ENCODE measurements at regions of chr17 and their contacts with region 1.

Region 1: GRCh38 chr17:7745748-7746470 is 28.4 kb downstream of the DNAH2 start:
- DNase-seq: peak; percentile 80 to 87
- H3K4me3 ChIP-seq: no peak overlapping the region
- H3K27ac ChIP-seq: peak overlapping the region; percentile 76
- H3K4me1 ChIP-seq: peaks cover 57% of the 10 kb centered on the region
- H3K27me3 ChIP-seq: no peaks in the 10 kb centered on the region
- CTCF ChIP-seq: peak; percentile 28

Region 2: DNA sequence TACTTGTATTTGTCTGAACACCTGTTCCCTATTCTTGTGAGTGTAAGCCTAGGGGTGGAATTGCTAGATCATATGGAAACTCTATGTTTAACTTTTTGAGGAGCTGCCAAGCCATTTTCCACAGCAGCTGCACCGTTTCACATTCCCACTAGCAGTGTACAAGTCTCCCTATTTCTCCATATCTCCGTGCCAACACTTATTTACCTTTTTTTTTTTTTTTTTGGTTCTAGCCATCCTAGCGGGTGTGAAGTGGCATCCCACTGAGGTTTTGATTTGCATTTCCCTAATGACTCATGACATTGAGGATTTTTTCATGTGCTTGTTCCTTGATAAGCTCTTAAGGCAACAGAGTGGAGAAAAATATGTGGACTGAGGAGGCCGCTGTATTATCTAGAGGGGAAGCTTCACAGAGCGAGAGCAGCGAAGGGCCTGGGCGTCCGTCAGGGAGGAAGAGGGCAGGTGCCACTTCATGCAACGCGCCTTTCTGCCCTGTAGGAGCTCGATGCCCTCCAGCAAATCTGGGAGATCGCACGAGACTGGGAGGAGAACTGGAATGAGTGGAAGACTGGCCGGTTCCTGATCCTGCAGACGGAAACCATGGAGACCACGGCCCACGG is 21.6 kb after region 1 on chr17:
- CTCF ChIA-PET with region 1: interaction called, 17 read pairs
- POLR2A ChIA-PET with region 1: interaction called, 3 read pairs
- intact Hi-C with region 1: no loop called
- DNase-seq: peak; percentile 78 to 88
- H3K4me3 ChIP-seq: peak overlapping the region; percentile 73
- H3K27ac ChIP-seq: peak overlapping the region; percentile 91
- H3K4me1 ChIP-seq: peaks cover 48% of the 10 kb centered on the region
- H3K27me3 ChIP-seq: no peaks in the 10 kb centered on the region
- CTCF ChIP-seq: 0 out of 2 replicates have a peak, but pooled peaks have one; percentile 23

Region 3: DNA sequence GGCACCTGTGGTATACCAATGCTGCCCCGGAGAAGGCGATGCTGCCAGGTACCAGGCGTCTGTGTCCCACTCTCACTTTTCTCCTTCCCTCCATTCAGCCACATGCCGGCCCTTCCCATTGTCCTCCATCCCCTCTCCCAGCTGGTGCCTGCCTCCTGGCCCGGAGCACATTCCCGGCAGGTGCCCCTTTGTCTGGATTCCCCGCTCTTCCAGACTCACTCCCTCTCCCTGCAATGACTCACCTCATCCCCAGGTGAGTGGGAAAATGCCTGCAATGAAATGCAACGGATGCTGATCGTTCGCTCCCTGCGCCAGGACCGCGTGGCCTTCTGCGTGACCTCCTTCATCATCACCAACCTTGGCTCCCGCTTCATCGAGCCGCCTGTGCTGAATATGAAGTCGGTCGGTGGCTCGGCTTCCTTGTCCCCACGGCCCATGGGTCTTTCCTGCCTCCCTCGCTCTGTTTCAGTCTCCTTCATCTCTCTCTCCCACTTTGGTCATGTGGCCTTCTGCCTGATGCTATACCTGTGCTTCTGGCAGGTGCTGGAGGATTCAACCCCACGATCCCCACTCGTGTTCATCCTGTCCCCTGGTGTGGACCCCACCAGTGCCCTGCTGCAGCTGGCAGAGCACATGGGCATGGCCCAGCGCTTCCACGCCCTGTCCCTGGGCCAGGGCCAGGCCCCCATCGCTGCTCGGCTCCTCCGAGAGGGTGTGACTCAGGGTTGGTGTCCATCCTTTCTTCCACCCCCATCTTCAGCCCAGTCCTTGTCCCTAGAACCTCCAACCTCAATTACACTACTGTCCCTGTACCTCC is 77.9 kb after region 1 on chr17:
- CTCF ChIA-PET with region 1: interaction called, 3 read pairs
- POLR2A ChIA-PET with region 1: no interaction called
- intact Hi-C with region 1: loop called (anchors 1 kb)
- DNase-seq: no peak
- H3K4me3 ChIP-seq: no peak overlapping the region
- H3K27ac ChIP-seq: no peak overlapping the region
- H3K4me1 ChIP-seq: no peaks in the 10 kb centered on the region
- H3K27me3 ChIP-seq: no peaks in the 10 kb centered on the region
- CTCF ChIP-seq: no peak

Region 4: GRCh38 chr17:7862692-7863437 is 117.0 kb after region 1 on chr17:
- CTCF ChIA-PET with region 1: no interaction called
- POLR2A ChIA-PET with region 1: no interaction called
- intact Hi-C with region 1: loop called (anchors 1 kb)
- DNase-seq: peak in 1 of 2 experiments; percentile 49
- H3K4me3 ChIP-seq: no peak overlapping the region
- H3K27ac ChIP-seq: no peak overlapping the region
- H3K4me1 ChIP-seq: peaks cover 7% of the 10 kb centered on the region; the same call in 1 of the 2 replicates
- H3K27me3 ChIP-seq: no peaks in the 10 kb centered on the region
- CTCF ChIP-seq: peak; percentile 87

Region 5: GRCh38 chr17:8041249-8041928 is 295.5 kb after region 1 on chr17:
- CTCF ChIA-PET with region 1: interaction called, 5 read pairs
- POLR2A ChIA-PET with region 1: no interaction called
- intact Hi-C with region 1: loop called (anchors 1 kb)
- DNase-seq: peak; percentile 43 to 51
- H3K4me3 ChIP-seq: no peak overlapping the region
- H3K27ac ChIP-seq: no peak overlapping the region
- H3K4me1 ChIP-seq: peaks cover 5% of the 10 kb centered on the region; the same call in 1 of the 2 replicates
- H3K27me3 ChIP-seq: no peaks in the 10 kb centered on the region
- CTCF ChIP-seq: peak; percentile 77

Measured in PC-9 (cell line).